Mammary epithelial cell (primary cell): ENCODE measurements at regions of chr10 and their contacts with region 1.

Region 1: GRCh38 chr10:105797234-105797890 is 1156.3 kb downstream of the SORCS3 start:
- DNase-seq: peak; percentile 48
- H3K4me3 ChIP-seq: no peak overlapping the region
- H3K27ac ChIP-seq: no peak overlapping the region
- H3K4me1 ChIP-seq: no peaks in the 10 kb centered on the region
- H3K27me3 ChIP-seq: no peaks in the 10 kb centered on the region
- CTCF ChIP-seq: peak; percentile 53 to 68

Region 2: GRCh38 chr10:106175760-106176377 is 378.5 kb after region 1 on chr10:
- CTCF ChIA-PET with region 1: no interaction called
- dilution Hi-C with region 1: no loop called
- in situ Hi-C with region 1: no loop called
- intact Hi-C with region 1: loop called (anchors 1 kb)
- DNase-seq: peak; percentile 8
- H3K4me3 ChIP-seq: no peak overlapping the region
- H3K27ac ChIP-seq: no peak overlapping the region
- H3K4me1 ChIP-seq: no peaks in the 10 kb centered on the region
- H3K27me3 ChIP-seq: no peaks in the 10 kb centered on the region
- CTCF ChIP-seq: peak; percentile 52 to 64